ENCODE measurements at regions of chr9 and their contacts with region 1.

Region 1: GRCh38 chr9:110048403-110048975 is 159.5 kb downstream of the C9orf152 start:
- DNase-seq: peak; percentile 40 to 84
- H3K4me3 ChIP-seq: peak overlapping the region; percentile 90
- H3K27ac ChIP-seq: peak overlapping the region; percentile 21; the same call in 1 of the 2 replicates
- H3K4me1 ChIP-seq: peaks cover 26% of the 10 kb centered on the region
- H3K27me3 ChIP-seq: no peaks in the 10 kb centered on the region
- CTCF ChIP-seq: no peak

Region 2: GRCh38 chr9:109986521-109986991 is 61.9 kb before region 1 on chr9:
- CTCF ChIA-PET with region 1: no interaction called
- POLR2A ChIA-PET with region 1: no interaction called
- intact Hi-C with region 1: loop called (anchors 2 kb)
- DNase-seq: peak in 1 of 2 experiments; percentile 74
- H3K4me3 ChIP-seq: no peak overlapping the region
- H3K27ac ChIP-seq: no peak overlapping the region
- H3K4me1 ChIP-seq: peaks cover 16% of the 10 kb centered on the region
- H3K27me3 ChIP-seq: no peaks in the 10 kb centered on the region
- CTCF ChIP-seq: no peak

Region 3: DNA sequence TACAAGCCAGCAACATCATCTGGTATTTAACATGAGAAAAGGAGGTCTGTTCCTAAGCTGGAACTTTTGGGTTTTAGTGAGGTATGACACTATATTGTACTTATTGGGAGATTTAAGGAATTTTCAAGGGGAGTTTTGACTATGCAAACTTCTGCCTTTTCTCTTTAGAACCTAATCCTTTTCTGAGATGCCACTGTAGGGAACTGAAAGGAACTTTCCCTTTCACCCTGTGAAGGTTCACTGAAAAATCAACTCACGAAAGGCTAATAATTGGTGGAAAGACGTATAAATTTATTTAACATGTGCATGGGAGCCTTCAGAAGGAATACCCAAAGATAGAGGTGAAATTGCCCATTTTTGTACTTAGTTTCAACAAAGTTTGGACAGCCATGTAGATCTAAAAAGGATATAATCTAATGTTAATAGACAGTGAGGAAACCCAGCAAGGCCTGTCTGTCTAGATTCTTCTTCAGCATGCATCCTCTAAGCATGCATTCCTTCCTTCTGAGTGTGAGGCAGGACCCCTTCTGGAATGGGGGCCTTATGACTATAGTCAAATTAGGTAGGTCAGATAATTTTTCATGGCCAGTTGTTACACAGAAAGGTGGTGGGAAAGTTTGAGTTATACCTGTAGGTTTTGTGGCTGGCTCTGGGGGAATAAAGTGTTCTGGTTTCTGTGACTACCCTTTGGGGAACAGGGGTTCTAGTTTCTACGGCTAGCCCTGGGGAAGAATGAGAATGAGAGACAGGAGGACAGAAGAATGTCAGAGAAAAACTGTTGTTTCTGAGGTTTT is 40.8 kb before region 1 on chr9:
- CTCF ChIA-PET with region 1: no interaction called
- POLR2A ChIA-PET with region 1: no interaction called
- intact Hi-C with region 1: loop called (anchors 1 kb)
- DNase-seq: peak in 1 of 2 experiments; percentile 50
- H3K4me3 ChIP-seq: no peak overlapping the region
- H3K27ac ChIP-seq: no peak overlapping the region
- H3K4me1 ChIP-seq: peaks cover 30% of the 10 kb centered on the region
- H3K27me3 ChIP-seq: no peaks in the 10 kb centered on the region
- CTCF ChIP-seq: no peak

Region 4: GRCh38 chr9:110029429-110029955 is 19.0 kb before region 1 on chr9:
- CTCF ChIA-PET with region 1: no interaction called
- POLR2A ChIA-PET with region 1: interaction called, 3 read pairs
- intact Hi-C with region 1: loop called (anchors 2 kb)
- DNase-seq: peak; percentile 46 to 91
- H3K4me3 ChIP-seq: no peak overlapping the region
- H3K27ac ChIP-seq: peak overlapping the region; percentile 5; the same call in 1 of the 2 replicates
- H3K4me1 ChIP-seq: peaks cover 40% of the 10 kb centered on the region
- H3K27me3 ChIP-seq: no peaks in the 10 kb centered on the region
- CTCF ChIP-seq: no peak

Region 5: DNA sequence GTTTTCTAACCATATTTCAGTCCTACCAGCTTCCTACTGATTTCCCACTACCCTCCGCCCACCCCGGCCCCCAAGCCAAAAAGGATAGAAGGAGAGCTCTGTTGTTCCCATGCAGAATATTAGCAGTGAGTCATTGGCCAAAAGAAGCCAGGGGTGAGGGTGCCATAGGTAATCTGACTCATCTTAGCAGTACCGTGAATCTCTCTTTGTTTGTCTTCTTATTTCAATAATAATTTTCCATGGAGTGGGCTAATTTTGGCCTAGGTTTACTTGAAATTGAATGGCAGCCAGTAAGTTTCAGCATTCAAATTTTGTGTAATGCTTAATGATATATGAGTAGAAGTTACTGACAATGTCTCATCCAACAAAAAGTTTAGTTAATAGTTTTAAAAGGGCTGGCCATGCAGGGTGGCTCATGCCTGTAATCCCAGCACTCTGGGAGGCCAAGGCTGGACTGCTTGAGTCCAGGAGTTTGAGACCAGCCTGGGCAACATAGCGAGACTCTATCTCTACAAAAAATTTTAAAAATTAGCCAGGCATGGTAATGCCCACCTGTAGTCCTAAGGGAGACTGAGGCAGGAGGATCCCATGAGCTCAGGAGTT is 85.2 kb after region 1 on chr9:
- CTCF ChIA-PET with region 1: interaction called, 6 read pairs
- POLR2A ChIA-PET with region 1: no interaction called
- intact Hi-C with region 1: loop called (anchors 2 kb)
- DNase-seq: peak; percentile 49 to 90
- H3K4me3 ChIP-seq: no peak overlapping the region
- H3K27ac ChIP-seq: peak overlapping the region; percentile 93
- H3K4me1 ChIP-seq: peaks cover 71% of the 10 kb centered on the region
- H3K27me3 ChIP-seq: no peaks in the 10 kb centered on the region
- CTCF ChIP-seq: no peak

Region 6: DNA sequence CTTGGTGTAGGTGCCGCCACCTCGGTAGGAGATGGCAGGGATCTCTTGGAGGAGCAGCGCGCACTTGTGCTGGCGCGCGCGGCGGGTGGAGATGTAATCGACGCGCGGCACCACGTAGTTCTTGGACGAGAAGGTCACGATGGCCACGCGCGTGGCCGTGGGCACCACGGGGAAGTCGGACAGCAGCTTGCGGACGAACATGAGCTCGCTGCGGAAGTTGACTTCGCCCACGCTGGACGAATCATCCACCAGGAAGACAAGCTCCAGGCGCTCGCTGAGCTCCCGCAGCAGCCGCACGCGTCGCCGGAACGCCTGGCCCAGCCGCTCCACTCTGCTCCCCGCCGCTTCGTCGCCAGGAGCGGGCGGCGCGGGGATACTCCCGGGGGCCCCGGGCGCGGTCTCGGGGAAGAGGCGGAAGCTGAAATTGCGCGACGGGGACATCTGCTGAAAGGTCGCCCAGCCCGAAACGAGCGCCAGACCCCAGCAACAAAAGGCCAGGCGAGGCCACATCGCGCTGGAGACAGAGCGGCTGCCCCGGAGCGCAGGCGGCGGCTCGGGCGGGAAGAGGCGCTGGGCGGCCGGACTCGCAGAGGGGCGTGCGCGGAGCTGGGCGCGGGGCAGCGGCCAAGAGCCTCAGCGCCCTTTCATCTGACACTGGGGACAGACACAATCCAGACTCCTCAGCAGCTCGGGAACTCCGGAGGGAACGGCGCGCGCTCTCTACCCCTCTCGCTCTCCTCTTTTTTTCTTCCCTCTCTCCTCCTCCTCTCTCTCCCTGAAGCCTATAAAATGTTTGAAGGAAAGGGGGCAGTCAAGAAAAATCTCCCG is 530.8 kb after region 1 on chr9 and contains the start of gene SVEP1:
- CTCF ChIA-PET with region 1: no interaction called
- POLR2A ChIA-PET with region 1: interaction called, 13 read pairs
- intact Hi-C with region 1: no loop called
- DNase-seq: peak in 1 of 2 experiments; percentile 37
- H3K4me3 ChIP-seq: peak within 1 kb of the TSS; percentile 65
- H3K27ac ChIP-seq: peak within 1 kb of the TSS; percentile 99
- H3K4me1 ChIP-seq: peaks cover 62% of the 10 kb centered on the region
- H3K27me3 ChIP-seq: no peaks in the 10 kb centered on the region
- CTCF ChIP-seq: no peak
- total RNA-seq, gene SVEP1: 2.9 and 3.3 TPM in 2 replicates